Heart left ventricle (tissue), 16 donors: ENCODE measurements at regions of chr13 and their contacts with region 1.

Region 1: GRCh38 chr13:38630780-38631179 is 56.1 kb upstream of the FREM2 start:
- DNase-seq: no peak
- ATAC-seq: no peak
- H3K4me3 ChIP-seq: no peak overlapping the region
- H3K27ac ChIP-seq: no peak overlapping the region
- H3K4me1 ChIP-seq: no peaks in the 10 kb centered on the region
- H3K27me3 ChIP-seq: no peaks in the 10 kb centered on the region
- CTCF ChIP-seq: no peak
- POLR2A ChIP-seq: no peak

Region 2: GRCh38 chr13:38090913-38091312 is 539.9 kb before region 1 on chr13:
- intact Hi-C with region 1: loop called in 1 of 10 experiments (anchors 10 kb)
- DNase-seq: no peak
- ATAC-seq: no peak
- H3K4me3 ChIP-seq: no peak overlapping the region
- H3K27ac ChIP-seq: no peak overlapping the region
- H3K4me1 ChIP-seq: no peaks in the 10 kb centered on the region
- H3K27me3 ChIP-seq: no peaks in the 10 kb centered on the region
- CTCF ChIP-seq: no peak
- POLR2A ChIP-seq: no peak

Region 3: GRCh38 chr13:38590796-38591507 is 39.8 kb before region 1 on chr13:
- intact Hi-C with region 1: no loop called
- DNase-seq: no peak
- ATAC-seq: no peak
- H3K4me3 ChIP-seq: no peak overlapping the region
- H3K27ac ChIP-seq: no peak overlapping the region
- H3K4me1 ChIP-seq: no peaks in the 10 kb centered on the region
- H3K27me3 ChIP-seq: peaks cover 0 to 6% (median 0%) of the 10 kb centered on the region in 9 donors
- CTCF ChIP-seq: no peak
- POLR2A ChIP-seq: no peak

Region 4: GRCh38 chr13:38602261-38602660 is 28.5 kb before region 1 on chr13:
- intact Hi-C with region 1: no loop called
- DNase-seq: no peak
- ATAC-seq: no peak
- H3K4me3 ChIP-seq: no peak overlapping the region
- H3K27ac ChIP-seq: no peak overlapping the region
- H3K4me1 ChIP-seq: no peaks in the 10 kb centered on the region
- H3K27me3 ChIP-seq: peaks cover 0 to 3% (median 0%) of the 10 kb centered on the region in 9 donors
- CTCF ChIP-seq: no peak
- POLR2A ChIP-seq: no peak

Region 5: DNA sequence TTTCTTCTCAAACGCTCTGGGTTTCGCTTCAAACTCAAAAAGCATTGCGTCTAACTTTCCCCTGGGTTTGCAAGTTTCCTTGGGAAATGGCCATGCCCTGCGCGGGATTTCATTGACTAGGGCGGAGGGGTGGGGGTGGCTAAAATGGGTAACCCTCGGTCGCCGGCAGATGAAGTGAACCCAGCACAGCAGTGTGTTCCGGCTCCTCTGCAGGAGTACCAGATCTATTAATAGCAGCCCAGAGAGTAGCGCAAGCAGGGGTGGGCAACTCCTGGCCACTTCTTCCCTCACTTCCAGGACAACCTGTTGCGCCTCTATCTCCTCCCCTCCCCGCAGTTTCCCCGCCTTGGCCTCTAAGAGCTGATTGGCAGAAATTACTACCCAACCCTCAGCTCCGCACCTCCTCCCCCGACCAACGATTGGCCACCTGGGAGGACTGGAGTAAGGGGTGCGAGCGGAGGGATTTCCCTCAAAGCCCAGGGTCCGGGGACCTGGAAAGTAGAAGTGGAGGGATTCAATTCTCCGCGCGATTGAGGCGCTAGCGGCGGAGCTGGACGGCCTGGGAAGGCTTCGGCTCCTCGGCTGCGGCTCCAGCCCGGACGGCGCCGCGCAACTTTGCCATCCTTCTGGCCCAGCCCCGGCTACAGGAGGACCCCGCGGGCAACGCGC is 55.9 kb after region 1 on chr13 and contains the start of gene FREM2:
- intact Hi-C with region 1: no loop called
- DNase-seq: peak in 1 of 5 donors; percentile 25
- ATAC-seq: peak; percentile 59 to 70 (median 64)
- H3K4me3 ChIP-seq: peak within 1 kb of the TSS; percentile 18 to 52 (median 38)
- H3K27ac ChIP-seq: no peak within 1 kb of the TSS
- H3K4me1 ChIP-seq: peaks cover 0 to 20% (median 0%) of the 10 kb centered on the region in 12 donors
- H3K27me3 ChIP-seq: peaks cover 0 to 47% (median 12%) of the 10 kb centered on the region in 9 donors
- CTCF ChIP-seq: no peak
- POLR2A ChIP-seq: no peak
- total RNA-seq, gene FREM2: 0.02 to 0.35 (median 0.18) TPM